OCI-LY7 (cell line): ENCODE measurements at regions of chr17 and their contacts with region 1.

Region 1: GRCh38 chr17:55527540-55528118 is 16.4 kb upstream of the SMIM36 start:
- DNase-seq: peak; percentile 48
- H3K4me3 ChIP-seq: no peak overlapping the region
- H3K27ac ChIP-seq: no peak overlapping the region
- H3K4me1 ChIP-seq: peaks cover 12% of the 10 kb centered on the region
- CTCF ChIP-seq: peak; percentile 75

Region 2: GRCh38 chr17:55601874-55602364 is 74.3 kb after region 1 on chr17:
- CTCF ChIA-PET with region 1: no interaction called
- POLR2A ChIA-PET with region 1: interaction called, 3 read pairs
- intact Hi-C with region 1: loop called (anchors 2 kb)
- DNase-seq: peak; percentile 26
- H3K4me3 ChIP-seq: no peak overlapping the region
- H3K27ac ChIP-seq: no peak overlapping the region
- H3K4me1 ChIP-seq: no peaks in the 10 kb centered on the region
- CTCF ChIP-seq: peak; percentile 78

Region 3: DNA sequence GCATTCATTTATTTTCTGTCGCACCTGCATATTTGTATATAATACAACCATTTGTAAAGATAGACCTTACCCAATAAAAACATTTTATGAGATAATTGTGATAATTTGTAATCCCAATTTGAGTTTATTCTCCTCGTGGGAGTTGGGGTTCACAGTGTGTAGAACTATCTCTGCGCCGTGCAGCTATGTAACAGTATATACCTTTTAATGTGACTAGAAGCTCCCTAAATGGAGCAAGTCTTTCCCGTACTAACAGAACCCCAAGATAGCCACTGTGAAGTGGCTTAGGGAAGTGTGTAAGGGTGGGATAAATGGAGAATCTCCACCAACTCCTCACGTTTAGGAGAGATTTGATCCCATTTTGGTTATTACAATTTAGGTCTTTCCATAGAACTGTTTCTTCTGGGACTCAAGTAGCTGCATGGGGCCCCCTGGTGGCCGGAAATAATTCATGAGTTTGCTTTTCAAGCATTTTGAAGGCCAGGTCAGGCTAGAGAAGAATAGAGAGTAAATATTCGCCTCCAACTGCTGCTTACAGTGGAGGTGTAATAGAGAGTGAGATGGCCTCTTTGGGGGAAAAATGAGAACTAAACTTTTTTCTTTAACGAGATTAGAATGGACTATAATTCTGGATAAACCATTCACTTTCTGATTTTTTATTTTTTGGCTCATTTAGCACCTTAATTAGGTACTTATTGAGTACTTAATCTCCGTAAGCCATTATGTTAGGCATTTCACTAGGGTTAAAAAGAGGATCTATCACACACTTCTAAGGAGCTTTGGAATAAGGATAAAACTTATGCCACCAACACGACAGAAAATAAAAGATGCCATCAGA is 190.5 kb after region 1 on chr17:
- CTCF ChIA-PET with region 1: no interaction called
- POLR2A ChIA-PET with region 1: no interaction called
- intact Hi-C with region 1: loop called (anchors 1 kb)
- DNase-seq: peak; percentile 72
- H3K4me3 ChIP-seq: no peak overlapping the region
- H3K27ac ChIP-seq: no peak overlapping the region
- H3K4me1 ChIP-seq: no peaks in the 10 kb centered on the region
- CTCF ChIP-seq: peak; percentile 93

Region 4: DNA sequence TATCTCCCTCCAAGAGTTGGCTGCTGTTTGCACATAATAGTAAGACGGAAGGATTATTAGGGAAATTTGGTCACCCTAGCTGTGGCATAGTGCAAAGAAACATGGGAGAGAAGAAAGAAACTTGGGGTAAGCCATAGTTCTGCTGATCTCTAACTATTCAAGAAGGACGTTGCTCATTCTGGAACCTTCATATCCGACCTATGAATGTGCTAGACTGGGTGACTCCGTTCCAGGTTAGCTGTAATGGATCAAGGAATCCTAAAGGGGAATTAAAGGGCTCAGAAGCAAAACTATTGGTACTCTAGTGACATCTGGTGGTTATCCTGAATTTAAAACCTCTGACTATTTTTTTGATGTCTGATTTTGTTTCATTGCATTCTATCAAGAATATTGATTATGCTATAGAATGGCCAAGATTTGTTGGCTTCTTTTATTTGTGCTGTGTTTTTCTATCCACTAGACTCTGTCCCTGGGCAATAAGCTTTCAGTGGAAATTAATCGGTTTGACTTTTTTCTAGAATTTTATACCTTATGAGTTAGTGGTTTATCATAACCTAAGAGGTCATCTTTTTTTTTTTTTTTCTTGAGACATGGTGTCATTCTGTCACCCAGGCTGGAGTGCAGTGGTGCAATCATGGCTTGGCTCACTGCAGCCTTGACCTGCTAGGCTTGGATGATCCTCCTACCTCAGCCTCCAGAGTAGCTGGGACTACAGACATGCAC is 242.7 kb after region 1 on chr17:
- CTCF ChIA-PET with region 1: no interaction called
- POLR2A ChIA-PET with region 1: interaction called, 3 read pairs
- intact Hi-C with region 1: loop called (anchors 1 kb)
- DNase-seq: peak; percentile 46
- H3K4me3 ChIP-seq: no peak overlapping the region
- H3K27ac ChIP-seq: no peak overlapping the region
- H3K4me1 ChIP-seq: no peaks in the 10 kb centered on the region
- CTCF ChIP-seq: peak; percentile 87

Region 5: GRCh38 chr17:55825213-55825612 is 297.6 kb after region 1 on chr17:
- CTCF ChIA-PET with region 1: no interaction called
- POLR2A ChIA-PET with region 1: no interaction called
- intact Hi-C with region 1: loop called (anchors 2 kb)
- DNase-seq: peak; percentile 18
- H3K4me3 ChIP-seq: no peak overlapping the region
- H3K27ac ChIP-seq: no peak overlapping the region
- H3K4me1 ChIP-seq: no peaks in the 10 kb centered on the region
- CTCF ChIP-seq: peak; percentile 76

Region 6: DNA sequence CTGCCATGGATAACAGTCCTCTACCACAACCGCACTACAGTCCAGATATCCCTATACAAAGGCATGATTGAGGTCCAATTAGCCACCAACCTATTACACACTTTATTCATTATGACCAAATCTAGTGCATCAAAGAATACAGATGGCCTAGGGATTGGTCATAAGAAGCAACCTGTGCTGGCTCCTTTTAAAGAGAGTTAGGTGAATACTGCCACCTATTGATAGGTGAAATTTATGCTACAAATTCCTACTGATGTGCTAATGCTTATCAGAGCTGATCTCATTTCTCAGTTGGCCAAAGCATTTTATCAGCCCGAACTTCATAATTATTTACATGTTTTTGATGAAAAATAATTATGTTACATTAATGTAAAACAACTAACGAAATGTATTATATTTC is 791.9 kb after region 1 on chr17:
- CTCF ChIA-PET with region 1: no interaction called
- POLR2A ChIA-PET with region 1: no interaction called
- intact Hi-C with region 1: loop called (anchors 2 kb)
- DNase-seq: peak; percentile 54
- H3K4me3 ChIP-seq: no peak overlapping the region
- H3K27ac ChIP-seq: no peak overlapping the region
- H3K4me1 ChIP-seq: no peaks in the 10 kb centered on the region
- CTCF ChIP-seq: peak; percentile 82